ENCODE measurements at regions of chr13 and their contacts with region 1.

Region 1: DNA sequence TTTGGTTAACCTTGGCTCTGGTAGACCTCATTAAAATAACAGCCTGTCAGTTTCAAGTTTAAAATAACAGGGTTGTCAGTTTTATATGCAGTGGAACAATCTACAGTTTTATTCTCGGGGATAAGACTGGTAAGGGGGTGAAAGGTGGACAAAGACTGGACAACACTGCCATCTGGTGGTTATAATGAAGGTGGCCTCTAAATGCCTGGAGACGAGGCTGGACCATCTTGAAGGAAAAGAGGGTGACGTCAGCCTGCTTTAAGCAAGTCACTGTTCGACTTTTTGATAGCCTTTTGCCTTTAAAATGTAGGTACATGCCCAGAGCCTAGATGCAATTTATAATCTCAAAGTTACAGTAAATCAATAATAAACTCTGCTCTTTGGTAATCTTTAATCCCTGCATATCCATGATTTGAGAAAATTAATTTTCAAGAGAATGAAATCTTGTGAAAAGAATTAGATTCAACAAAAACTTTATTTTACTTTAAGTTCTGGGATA is 117.0 kb downstream of the DCT start:
- DNase-seq: peak; percentile 58 to 70
- H3K4me3 ChIP-seq: no peak overlapping the region
- H3K27ac ChIP-seq: no peak overlapping the region
- H3K4me1 ChIP-seq: no peaks in the 10 kb centered on the region
- H3K27me3 ChIP-seq: no peaks in the 10 kb centered on the region
- CTCF ChIP-seq: peak; percentile 77 to 83

Region 2: DNA sequence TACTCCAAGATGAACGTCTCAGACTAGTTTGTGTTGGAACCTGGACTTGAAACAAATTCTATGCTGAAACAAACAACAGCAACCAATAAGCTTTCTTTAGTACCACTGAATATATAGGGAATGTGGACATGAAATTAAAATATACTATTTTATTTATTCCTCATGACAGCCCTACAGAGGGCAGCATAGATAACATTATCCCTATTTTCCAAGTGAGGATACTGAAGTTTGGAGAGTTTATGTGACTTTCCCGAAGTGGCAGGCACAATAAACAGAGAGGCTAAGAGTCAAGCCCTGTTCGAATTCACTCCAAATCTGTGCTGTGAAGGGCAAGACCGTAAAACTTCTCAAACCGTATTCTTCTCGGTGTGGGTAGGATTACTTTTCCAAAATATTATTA is 1645.7 kb before region 1 on chr13:
- intact Hi-C with region 1: loop called (anchors 10 kb)
- DNase-seq: no peak
- H3K4me3 ChIP-seq: no peak overlapping the region
- H3K27ac ChIP-seq: no peak overlapping the region
- H3K4me1 ChIP-seq: no peaks in the 10 kb centered on the region
- H3K27me3 ChIP-seq: no peaks in the 10 kb centered on the region
- CTCF ChIP-seq: peak; percentile 42 to 55

Region 3: DNA sequence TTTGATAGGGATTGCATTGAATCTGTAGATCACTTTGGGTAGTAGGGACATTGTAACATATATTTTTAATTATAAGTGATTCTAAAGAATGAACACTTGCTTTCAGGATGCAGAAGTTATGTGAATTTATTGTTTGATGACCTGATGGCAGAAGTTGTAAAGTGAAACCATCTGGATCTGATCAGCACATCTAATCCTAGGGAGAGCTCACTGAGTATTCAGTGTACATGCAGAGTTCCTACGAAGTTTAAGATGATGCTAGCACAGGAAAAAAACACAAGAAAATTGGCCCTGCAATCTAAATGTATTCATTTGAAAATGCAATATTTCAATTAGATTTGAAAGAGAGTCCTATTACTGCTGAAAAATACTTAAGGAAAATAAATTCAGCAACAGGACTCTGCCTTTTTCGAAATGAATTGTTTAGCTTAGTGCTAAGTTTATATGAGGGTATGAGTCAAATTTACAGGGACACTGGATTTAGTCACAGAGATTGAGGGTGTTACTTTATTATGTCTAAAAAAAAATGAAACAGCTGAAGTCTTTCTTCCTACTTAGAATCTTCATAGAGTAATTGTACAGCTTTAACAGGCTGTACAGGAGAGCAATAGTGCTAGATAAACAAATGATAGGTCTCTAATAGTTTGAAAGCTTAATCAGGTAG is 268.7 kb before region 1 on chr13:
- intact Hi-C with region 1: no loop called
- DNase-seq: no peak
- H3K4me3 ChIP-seq: no peak overlapping the region
- H3K27ac ChIP-seq: no peak overlapping the region
- H3K4me1 ChIP-seq: no peaks in the 10 kb centered on the region
- H3K27me3 ChIP-seq: no peaks in the 10 kb centered on the region
- CTCF ChIP-seq: no peak

Measured in tibial artery (tissue), 4 donors.